Dendritic cell treated with granulocyte-macrophage colony-stimulating factor and Interleukin-4, amounts not matched to agents 40 ng/mL and 50 ng/mL, for 4 days (primary cell): ENCODE measurements at regions of chr5 and their contacts with region 1.

Region 1: GRCh38 chr5:139091439-139092156 is 106.6 kb downstream of the SIL1 start:
- H3K4me3 Mint-ChIP-seq: no peak overlapping the region
- H3K27ac Mint-ChIP-seq: no peak overlapping the region
- H3K4me1 Mint-ChIP-seq: peaks cover 72% of the 10 kb centered on the region
- H3K27me3 Mint-ChIP-seq: no peaks in the 10 kb centered on the region

Region 2: GRCh38 chr5:138663009-138663408 is 428.6 kb before region 1 on chr5:
- intact Hi-C with region 1: no loop called
- H3K4me3 Mint-ChIP-seq: no peak overlapping the region
- H3K27ac Mint-ChIP-seq: peak overlapping the region; percentile 68
- H3K4me1 Mint-ChIP-seq: peaks cover 60% of the 10 kb centered on the region
- H3K27me3 Mint-ChIP-seq: peaks cover 31% of the 10 kb centered on the region

Region 3: DNA sequence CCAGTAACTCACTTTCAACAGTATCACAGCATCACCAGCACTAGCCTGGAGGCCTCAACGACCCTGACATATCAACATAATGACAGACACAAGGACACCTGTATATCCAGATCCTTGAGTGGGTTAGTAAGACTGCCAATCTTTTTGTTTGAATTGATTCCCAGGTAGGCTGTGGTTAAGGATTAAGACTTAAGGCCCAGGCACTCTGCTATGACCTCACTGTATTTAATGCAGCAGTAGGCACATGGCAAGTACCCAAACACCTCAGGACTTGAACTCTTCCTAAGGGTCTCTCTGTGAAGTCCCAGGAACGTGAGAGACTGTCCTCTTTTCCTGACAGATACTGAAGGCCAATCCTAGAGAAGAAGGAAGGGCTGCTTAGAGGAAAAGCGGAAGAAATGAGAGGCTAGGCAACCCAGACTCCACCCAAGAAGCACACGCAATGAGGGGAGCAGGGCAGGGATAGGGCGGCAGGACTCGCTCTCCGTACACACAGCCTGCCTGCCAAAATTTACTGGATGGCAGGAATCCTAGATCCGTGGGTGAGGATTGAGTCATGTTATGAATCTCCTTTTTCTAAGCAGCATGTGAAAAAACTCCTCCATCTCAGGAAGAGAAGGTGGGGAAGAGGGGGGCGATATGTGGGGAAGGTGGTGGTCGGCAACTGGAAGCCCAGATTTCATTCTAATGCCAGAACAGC is 13.1 kb after region 1 on chr5:
- intact Hi-C with region 1: no loop called
- H3K4me3 Mint-ChIP-seq: no peak overlapping the region
- H3K27ac Mint-ChIP-seq: no peak overlapping the region
- H3K4me1 Mint-ChIP-seq: peaks cover 6% of the 10 kb centered on the region
- H3K27me3 Mint-ChIP-seq: no peaks in the 10 kb centered on the region

Region 4: DNA sequence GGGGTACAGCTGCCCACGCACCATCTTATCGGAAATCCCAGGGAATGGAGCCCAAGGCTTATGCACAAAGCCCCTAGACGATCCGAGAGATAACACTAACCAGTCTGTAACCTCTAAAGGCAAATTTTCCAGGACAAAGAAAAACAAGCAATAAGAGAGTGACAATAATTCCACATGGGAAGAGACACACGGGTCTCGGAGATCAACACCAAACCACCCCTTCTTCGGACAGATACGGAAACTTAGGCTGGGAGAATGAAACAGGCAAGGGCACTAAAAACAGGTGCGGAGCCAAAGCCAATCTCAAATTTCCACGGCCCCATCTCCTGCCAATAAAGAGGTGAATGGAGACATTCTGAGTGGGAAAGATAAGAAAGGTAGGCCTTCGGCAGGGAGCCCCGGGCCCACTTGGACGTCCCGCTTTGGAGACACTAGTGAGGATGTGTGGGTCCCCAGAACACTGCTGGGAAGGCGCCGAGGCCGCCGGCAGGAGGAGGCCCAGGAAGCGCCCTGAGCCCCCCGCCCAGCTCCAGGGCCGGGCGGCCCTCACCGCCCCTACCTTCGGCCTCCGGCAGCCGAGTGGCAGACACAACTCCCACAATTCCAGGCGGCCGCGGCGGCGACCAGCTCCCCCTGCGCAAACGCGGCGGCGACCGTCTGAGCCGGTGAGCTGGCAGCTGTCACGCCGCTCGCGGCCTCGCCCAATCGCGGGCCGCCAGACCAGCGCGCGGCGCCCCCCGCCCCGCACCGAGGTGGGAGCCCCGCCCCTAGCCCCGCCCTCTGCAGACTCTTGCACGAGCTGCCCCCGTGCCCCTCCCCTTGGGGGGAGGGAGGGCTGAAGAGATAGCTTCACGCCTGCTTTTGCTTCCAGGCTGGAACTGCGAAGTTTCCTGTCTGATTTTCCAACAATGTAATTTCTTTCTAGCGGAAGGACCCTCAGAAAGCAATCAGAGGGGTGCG is 106.4 kb after region 1 on chr5 and contains the start of gene SIL1:
- intact Hi-C with region 1: loop called (anchors 10 kb)
- H3K4me3 Mint-ChIP-seq: peak within 1 kb of the TSS; percentile 91
- H3K27ac Mint-ChIP-seq: peak within 1 kb of the TSS; percentile 94
- H3K4me1 Mint-ChIP-seq: peaks cover 34% of the 10 kb centered on the region
- H3K27me3 Mint-ChIP-seq: no peaks in the 10 kb centered on the region